ENCODE measurements at regions of chr5 and their contacts with region 1.

Region 1: GRCh38 chr5:40578501-40579451 is 100.9 kb upstream of the PTGER4 start:
- DNase-seq: peak; percentile 84
- ATAC-seq: peak; percentile 90
- H3K4me3 Mint-ChIP-seq: peak overlapping the region; percentile 64
- H3K27ac Mint-ChIP-seq: peak overlapping the region; percentile 84
- H3K4me1 Mint-ChIP-seq: peaks cover 38% of the 10 kb centered on the region
- H3K27me3 Mint-ChIP-seq: no peaks in the 10 kb centered on the region
- CTCF ChIP-seq: no peak

Region 2: GRCh38 chr5:39948867-39949468 is 629.8 kb before region 1 on chr5:
- CTCF ChIA-PET with region 1: no interaction called
- POLR2A ChIA-PET with region 1: no interaction called
- intact Hi-C with region 1: loop called (anchors 5 kb)
- DNase-seq: peak; percentile 74
- ATAC-seq: peak; percentile 83
- H3K4me3 Mint-ChIP-seq: no peak overlapping the region
- H3K27ac Mint-ChIP-seq: no peak overlapping the region
- H3K4me1 Mint-ChIP-seq: peaks cover 3% of the 10 kb centered on the region
- H3K27me3 Mint-ChIP-seq: no peaks in the 10 kb centered on the region
- CTCF ChIP-seq: peak; percentile 62

Region 3: GRCh38 chr5:40547994-40548575 is 30.7 kb before region 1 on chr5:
- CTCF ChIA-PET with region 1: no interaction called
- POLR2A ChIA-PET with region 1: no interaction called
- intact Hi-C with region 1: no loop called
- DNase-seq: no peak
- ATAC-seq: no peak
- H3K4me3 Mint-ChIP-seq: no peak overlapping the region
- H3K27ac Mint-ChIP-seq: no peak overlapping the region
- H3K4me1 Mint-ChIP-seq: peaks cover 3% of the 10 kb centered on the region
- H3K27me3 Mint-ChIP-seq: no peaks in the 10 kb centered on the region
- CTCF ChIP-seq: no peak

Region 4: GRCh38 chr5:40614923-40615585 is 36.3 kb after region 1 on chr5:
- CTCF ChIA-PET with region 1: interaction called, 3 read pairs
- POLR2A ChIA-PET with region 1: no interaction called
- intact Hi-C with region 1: loop called (anchors 5 kb)
- DNase-seq: no peak
- ATAC-seq: no peak
- H3K4me3 Mint-ChIP-seq: peak overlapping the region; percentile 34
- H3K27ac Mint-ChIP-seq: peak overlapping the region; percentile 56
- H3K4me1 Mint-ChIP-seq: peaks cover 28% of the 10 kb centered on the region
- H3K27me3 Mint-ChIP-seq: no peaks in the 10 kb centered on the region
- CTCF ChIP-seq: no peak